GM12878 (cell line): ENCODE measurements at regions of chr9 and their contacts with region 1.

Region 1: GRCh38 chr9:113275157-113276131 is at the starts of genes CDC26 and PRPF4:
- DNase-seq: peak; percentile 87
- ATAC-seq: peak; percentile 94
- H3K4me3 ChIP-seq: peak within 1 kb of the TSS; percentile 75
- H3K27ac ChIP-seq: peak within 1 kb of the TSS; percentile 89
- H3K4me1 ChIP-seq: peaks cover 8% of the 10 kb centered on the region; the same call in 1 of the 2 replicates
- H3K27me3 ChIP-seq: no peaks in the 10 kb centered on the region
- CTCF ChIP-seq: no peak
- EP300 ChIP-seq: no peak
- POLR2A ChIP-seq: peak; percentile 100
- RAD21 ChIP-seq: no peak
- polyA plus RNA-seq, gene CDC26: 140 to 156 TPM
- polyA plus RNA-seq, gene PRPF4: 23.0 to 43.5 TPM

Region 2: DNA sequence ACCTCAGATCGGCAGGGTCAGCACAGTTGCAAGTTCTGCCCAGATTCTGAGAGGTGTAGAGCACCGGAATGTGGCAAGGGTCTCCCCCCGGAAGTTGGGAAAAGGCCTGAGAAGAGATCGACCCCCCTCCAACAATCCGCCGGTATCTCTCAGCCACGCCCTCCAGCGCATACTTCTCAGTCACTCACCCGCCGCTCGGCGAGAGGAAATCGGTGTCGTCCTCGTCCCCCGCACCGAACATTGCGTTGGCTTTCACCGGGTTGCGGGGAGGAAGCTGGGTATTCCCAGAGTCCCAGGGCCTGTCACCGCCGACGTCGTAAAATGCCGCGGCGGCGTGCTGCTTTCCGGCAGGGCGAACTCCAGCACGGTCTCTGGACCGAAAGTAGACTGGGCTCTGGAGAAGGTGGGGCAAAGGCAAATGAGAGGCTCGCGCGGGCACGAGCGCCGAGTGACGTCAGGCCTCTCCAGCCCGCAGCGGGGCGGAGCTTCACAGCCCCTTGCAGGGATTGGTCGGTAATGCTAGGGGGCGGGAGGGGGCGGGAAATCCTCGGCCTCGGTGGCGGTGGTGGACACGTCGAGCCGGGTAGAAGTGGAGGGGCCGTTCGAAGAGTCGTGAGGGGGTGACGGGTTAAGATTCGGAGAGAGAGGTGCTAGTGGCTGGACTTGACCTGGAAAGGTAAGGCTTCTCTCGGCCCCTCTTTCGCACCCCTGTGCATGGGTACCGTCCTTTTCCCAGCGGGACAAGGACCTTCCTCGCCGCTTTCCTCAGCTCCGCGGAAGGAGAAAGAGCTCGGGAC is 54.2 kb before region 1 on chr9 and contains the starts of genes FKBP15 and SLC31A1:
- CTCF ChIA-PET with region 1: interaction called, 52 read pairs
- POLR2A ChIA-PET with region 1: interaction called, 32 read pairs
- RAD21 ChIA-PET with region 1: interaction called, 32 read pairs
- SMC1A ChIA-PET with region 1: interaction called, 68 read pairs
- in situ Hi-C with region 1: no loop called
- intact Hi-C with region 1: loop called (anchors 1 kb)
- DNase-seq: peak; percentile 94
- ATAC-seq: peak; percentile 90
- H3K4me3 ChIP-seq: peak within 1 kb of the TSS; percentile 94
- H3K27ac ChIP-seq: peak within 1 kb of the TSS; percentile 95
- H3K4me1 ChIP-seq: peaks cover 4% of the 10 kb centered on the region; the same call in 1 of the 2 replicates
- H3K27me3 ChIP-seq: no peaks in the 10 kb centered on the region
- CTCF ChIP-seq: no peak
- EP300 ChIP-seq: peak in 1 of 2 experiments; percentile 29; a peak in 1 of 4 replicates
- POLR2A ChIP-seq: peak; percentile 80
- RAD21 ChIP-seq: no peak
- polyA plus RNA-seq, gene FKBP15: 5.0 to 8.2 TPM
- polyA plus RNA-seq, gene SLC31A1: 7.3 to 10.0 TPM

Region 3: GRCh38 chr9:113340017-113340699 is 64.7 kb after region 1 on chr9 and contains the start of gene WDR31:
- CTCF ChIA-PET with region 1: interaction called, 7 read pairs
- POLR2A ChIA-PET with region 1: interaction called, 7 read pairs
- RAD21 ChIA-PET with region 1: interaction called, 7 read pairs
- SMC1A ChIA-PET with region 1: interaction called, 3 read pairs
- in situ Hi-C with region 1: no loop called
- intact Hi-C with region 1: loop called (anchors 5 kb)
- DNase-seq: peak; percentile 56
- ATAC-seq: peak; percentile 99
- H3K4me3 ChIP-seq: peak within 1 kb of the TSS; percentile 92
- H3K27ac ChIP-seq: no peak within 1 kb of the TSS; the same call in 1 of the 2 replicates
- H3K4me1 ChIP-seq: no peaks in the 10 kb centered on the region
- H3K27me3 ChIP-seq: no peaks in the 10 kb centered on the region
- CTCF ChIP-seq: no peak
- EP300 ChIP-seq: no peak
- POLR2A ChIP-seq: no peak; the same call in none of the 2 replicates
- RAD21 ChIP-seq: 0 out of 2 replicates have a peak, but pooled peaks have one; percentile 4
- polyA plus RNA-seq, gene WDR31: 0.26 to 0.29 TPM

Region 4: GRCh38 chr9:113410207-113410864 is 134.9 kb after region 1 on chr9 and contains the starts of genes C9orf43 and POLE3:
- CTCF ChIA-PET with region 1: interaction called, 96 read pairs
- POLR2A ChIA-PET with region 1: interaction called, 18 read pairs
- RAD21 ChIA-PET with region 1: interaction called, 15 read pairs
- SMC1A ChIA-PET with region 1: interaction called, 46 read pairs
- in situ Hi-C with region 1: loop called (anchors 5 kb)
- intact Hi-C with region 1: loop called (anchors 1 kb)
- DNase-seq: peak; percentile 80
- ATAC-seq: peak; percentile 96
- H3K4me3 ChIP-seq: peak within 1 kb of the TSS; percentile 92
- H3K27ac ChIP-seq: peak within 1 kb of the TSS; percentile 98
- H3K4me1 ChIP-seq: peaks cover 16% of the 10 kb centered on the region; the same call in 1 of the 2 replicates
- H3K27me3 ChIP-seq: no peaks in the 10 kb centered on the region
- CTCF ChIP-seq: no peak; a peak in 1 of 6 replicates
- EP300 ChIP-seq: 0 out of 4 replicates have a peak, but pooled peaks of 1 of the 2 experiments have one; percentile 15
- POLR2A ChIP-seq: peak; percentile 90
- RAD21 ChIP-seq: no peak
- polyA plus RNA-seq, gene C9orf43: 0.23 to 0.51 TPM
- polyA plus RNA-seq, gene POLE3: 40.8 to 65.9 TPM

Region 5: DNA sequence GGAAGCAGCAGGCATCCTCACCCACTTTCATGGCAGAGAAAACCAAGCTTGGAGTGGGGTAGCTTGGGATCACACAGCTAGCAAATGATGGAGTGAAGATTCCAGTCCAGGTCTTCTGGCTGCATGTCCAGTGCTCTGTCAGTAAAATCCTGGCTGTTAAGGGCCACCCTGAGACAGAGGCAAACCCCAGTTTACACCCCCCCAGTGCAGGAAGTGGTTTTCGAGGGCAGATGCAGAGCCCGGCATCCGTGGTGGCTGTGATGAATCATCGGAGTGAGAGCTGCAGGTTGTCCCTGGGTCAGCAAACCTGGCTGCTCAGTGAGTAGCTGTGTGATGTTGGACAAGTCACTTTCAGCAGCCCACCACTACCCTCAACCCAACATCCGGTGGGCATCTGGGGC is 303.4 kb after region 1 on chr9:
- CTCF ChIA-PET with region 1: interaction called, 4 read pairs
- POLR2A ChIA-PET with region 1: no interaction called
- RAD21 ChIA-PET with region 1: interaction called, 8 read pairs
- SMC1A ChIA-PET with region 1: interaction called, 14 read pairs
- in situ Hi-C with region 1: loop called (anchors 5 kb)
- intact Hi-C with region 1: loop called (anchors 5 kb)
- DNase-seq: peak; percentile 88
- ATAC-seq: peak; percentile 72
- H3K4me3 ChIP-seq: 0 out of 2 replicates have a peak overlapping the region, but pooled peaks have one; percentile 16
- H3K27ac ChIP-seq: peak overlapping the region; percentile 70
- H3K4me1 ChIP-seq: peaks cover 91% of the 10 kb centered on the region
- H3K27me3 ChIP-seq: no peaks in the 10 kb centered on the region
- CTCF ChIP-seq: no peak
- EP300 ChIP-seq: peak; percentile 80 to 85; a peak in 3 of 4 replicates
- POLR2A ChIP-seq: peak; percentile 60
- RAD21 ChIP-seq: no peak; the same call in 1 of the 2 replicates

Region 6: GRCh38 chr9:114385412-114386181 is 1110.2 kb after region 1 on chr9:
- CTCF ChIA-PET with region 1: no interaction called
- POLR2A ChIA-PET with region 1: no interaction called
- RAD21 ChIA-PET with region 1: no interaction called
- SMC1A ChIA-PET with region 1: no interaction called
- in situ Hi-C with region 1: no loop called
- intact Hi-C with region 1: loop called (anchors 10 kb)
- DNase-seq: peak; percentile 97
- ATAC-seq: peak; percentile 74
- H3K4me3 ChIP-seq: peak overlapping the region; percentile 93
- H3K27ac ChIP-seq: peak overlapping the region; percentile 100
- H3K4me1 ChIP-seq: peaks cover 66% of the 10 kb centered on the region
- H3K27me3 ChIP-seq: no peaks in the 10 kb centered on the region
- CTCF ChIP-seq: no peak; a peak in 1 of 6 replicates
- EP300 ChIP-seq: peak; percentile 90 to 95
- POLR2A ChIP-seq: peak; percentile 90
- RAD21 ChIP-seq: no peak